Right ventricle myocardium superior (tissue), 1 donor: ENCODE measurements at regions of chr15 and their contacts with region 1.

Region 1: DNA sequence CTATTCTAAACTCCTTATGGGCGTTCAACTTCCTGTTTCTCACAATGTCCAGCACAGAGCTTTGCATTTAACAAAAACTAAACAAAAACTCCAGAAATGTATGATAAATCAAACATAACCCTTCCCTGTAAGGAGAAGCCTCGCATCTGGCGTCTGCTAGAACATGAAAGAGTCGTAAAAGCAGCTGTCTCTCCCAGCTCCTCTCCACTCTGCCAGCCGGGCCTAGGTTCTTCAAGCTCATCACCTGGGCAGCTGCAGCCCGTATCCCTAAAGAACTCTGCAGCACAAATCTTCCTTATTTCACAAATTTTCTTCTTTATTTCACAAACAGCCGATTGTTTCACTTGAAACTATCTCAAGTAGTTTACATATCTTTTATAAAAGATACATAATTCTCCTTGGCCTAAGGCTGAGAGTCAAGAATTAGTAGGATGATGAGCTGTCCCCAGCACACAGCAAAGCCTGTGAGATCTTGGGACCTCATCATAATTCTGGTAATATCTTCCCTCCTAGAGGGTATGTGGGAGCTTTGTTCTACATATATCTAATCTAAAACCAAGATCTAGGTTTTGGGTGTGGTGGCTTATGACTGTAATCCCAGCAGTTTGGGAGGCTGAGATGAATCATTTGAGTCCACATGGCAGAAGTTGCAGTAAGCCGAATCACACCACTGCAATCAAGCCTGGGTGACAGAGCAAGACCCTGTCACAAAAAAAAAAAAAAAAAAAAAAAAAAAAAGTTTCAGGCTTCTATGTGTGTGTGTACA is 35.3 kb downstream of the ANXA2 start:
- DNase-seq: no peak
- ATAC-seq: peak; percentile 35

Region 2: GRCh38 chr15:60397772-60398445 is 35.4 kb after region 1 on chr15 and contains the start of gene ANXA2:
- intact Hi-C with region 1: loop called (anchors 5 kb)
- DNase-seq: peak; percentile 92
- ATAC-seq: peak; percentile 79
- total RNA-seq, gene ANXA2: 157 TPM

Region 3: DNA sequence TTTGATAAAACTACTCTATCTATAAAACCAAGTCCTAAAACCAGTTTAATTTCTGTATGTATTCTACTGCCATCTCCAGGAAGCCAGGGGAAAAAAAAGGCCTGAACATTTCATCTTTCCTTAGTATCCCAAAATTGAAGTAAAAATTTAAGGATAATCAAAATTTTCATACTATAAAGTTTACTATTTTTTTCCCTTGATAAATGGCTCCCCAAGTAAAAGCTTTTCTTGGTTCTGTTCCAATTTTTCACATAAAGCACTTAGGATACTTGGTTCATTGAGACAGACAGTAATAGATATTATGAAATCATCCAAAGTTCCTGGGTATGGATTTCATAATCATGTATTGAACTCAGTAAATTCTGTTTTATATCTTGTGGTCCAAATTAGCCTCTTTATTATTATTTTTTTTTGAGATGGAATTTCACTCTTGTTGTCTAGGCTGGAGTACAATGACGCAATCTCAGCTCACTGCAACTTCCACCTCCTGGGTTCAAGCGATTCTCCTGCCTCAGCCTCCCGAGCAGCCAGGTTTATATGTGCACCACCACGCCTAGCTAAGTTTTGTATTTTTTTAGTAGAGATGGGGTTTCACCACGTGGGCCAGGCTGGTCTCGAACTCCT is 81.9 kb after region 1 on chr15:
- intact Hi-C with region 1: loop called (anchors 5 kb)
- DNase-seq: no peak
- ATAC-seq: peak; percentile 56